ENCODE measurements at regions of chr2 and their contacts with region 1.

Region 1: DNA sequence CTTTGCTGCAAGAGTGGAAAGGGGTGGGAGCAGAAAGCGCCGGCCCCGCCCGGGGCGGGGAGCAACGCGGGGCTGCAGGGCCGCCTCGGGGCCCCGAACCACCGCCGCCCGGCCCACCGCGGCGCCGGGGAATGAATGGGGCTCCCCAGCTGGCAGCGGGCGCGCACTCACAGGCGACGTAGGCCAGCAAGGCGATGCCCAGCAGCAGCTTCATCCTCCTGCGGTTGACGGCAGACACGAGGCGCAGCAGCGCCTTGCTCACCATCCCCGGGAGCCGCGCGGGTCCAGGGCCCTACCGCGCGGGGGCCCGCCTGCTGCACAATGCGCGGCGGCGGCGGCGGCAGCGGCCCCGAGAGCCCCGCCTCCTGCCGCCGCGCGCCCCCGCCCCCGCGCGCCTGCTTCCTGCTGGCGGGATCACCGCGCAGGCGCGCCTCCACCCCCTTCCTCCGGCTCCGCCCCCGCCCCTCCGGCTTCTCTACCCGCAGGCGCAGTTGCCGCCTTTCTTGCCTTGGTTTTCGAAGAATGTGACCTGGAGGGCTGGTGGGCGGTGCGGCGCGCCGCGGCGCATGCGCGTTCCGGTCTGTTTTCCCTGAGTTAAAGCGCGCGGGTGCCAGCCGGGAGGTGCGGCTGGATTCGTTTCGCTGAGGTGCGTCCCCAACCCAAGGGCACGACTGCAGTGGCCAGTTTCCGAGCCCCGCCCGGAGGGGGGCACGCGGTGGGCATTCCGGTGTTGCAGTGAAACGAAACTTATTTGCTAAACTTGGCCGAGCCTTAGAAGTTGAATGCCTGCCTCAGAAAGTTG is at the start of gene UXS1:
- DNase-seq: peak; percentile 93 to 99
- H3K4me3 ChIP-seq: peak within 1 kb of the TSS; percentile 93 to 96
- H3K27ac ChIP-seq: peak within 1 kb of the TSS; percentile 74 to 78
- H3K4me1 ChIP-seq: peaks cover 0 to 8% of the 10 kb centered on the region in 2 donors
- H3K27me3 ChIP-seq: no peaks in the 10 kb centered on the region
- CTCF ChIP-seq: no peak
- total RNA-seq, gene UXS1: 146 TPM

Region 2: GRCh38 chr2:105337124-105338019 is 856.8 kb before region 1 on chr2 and contains the start of gene C2orf49:
- intact Hi-C with region 1: loop called (anchors 5 kb)
- DNase-seq: peak in 1 of 2 donors; percentile 91
- H3K4me3 ChIP-seq: peak within 1 kb of the TSS; percentile 69 to 73
- H3K27ac ChIP-seq: peak within 1 kb of the TSS; percentile 94 to 96
- H3K4me1 ChIP-seq: peaks cover 0 to 13% of the 10 kb centered on the region in 2 donors
- H3K27me3 ChIP-seq: no peaks in the 10 kb centered on the region
- CTCF ChIP-seq: no peak
- total RNA-seq, gene C2orf49: 12.2 TPM

Region 3: GRCh38 chr2:105576440-105577252 is 617.5 kb before region 1 on chr2:
- intact Hi-C with region 1: loop called (anchors 10 kb)
- DNase-seq: no peak
- H3K4me3 ChIP-seq: no peak overlapping the region
- H3K27ac ChIP-seq: no peak overlapping the region
- H3K4me1 ChIP-seq: peaks cover 0 to 4% of the 10 kb centered on the region in 2 donors
- H3K27me3 ChIP-seq: no peaks in the 10 kb centered on the region
- CTCF ChIP-seq: peak; percentile 44 to 70 (median 46)

Region 4: GRCh38 chr2:105744091-105744908 is 449.9 kb before region 1 on chr2:
- intact Hi-C with region 1: loop called (anchors 5 kb)
- DNase-seq: peak in 1 of 2 donors; percentile 76
- H3K4me3 ChIP-seq: peak overlapping the region; percentile 77 to 96
- H3K27ac ChIP-seq: peak overlapping the region; percentile 89 to 94
- H3K4me1 ChIP-seq: peaks cover 7 to 23% of the 10 kb centered on the region in 2 donors
- H3K27me3 ChIP-seq: no peaks in the 10 kb centered on the region
- CTCF ChIP-seq: no peak

Region 5: DNA sequence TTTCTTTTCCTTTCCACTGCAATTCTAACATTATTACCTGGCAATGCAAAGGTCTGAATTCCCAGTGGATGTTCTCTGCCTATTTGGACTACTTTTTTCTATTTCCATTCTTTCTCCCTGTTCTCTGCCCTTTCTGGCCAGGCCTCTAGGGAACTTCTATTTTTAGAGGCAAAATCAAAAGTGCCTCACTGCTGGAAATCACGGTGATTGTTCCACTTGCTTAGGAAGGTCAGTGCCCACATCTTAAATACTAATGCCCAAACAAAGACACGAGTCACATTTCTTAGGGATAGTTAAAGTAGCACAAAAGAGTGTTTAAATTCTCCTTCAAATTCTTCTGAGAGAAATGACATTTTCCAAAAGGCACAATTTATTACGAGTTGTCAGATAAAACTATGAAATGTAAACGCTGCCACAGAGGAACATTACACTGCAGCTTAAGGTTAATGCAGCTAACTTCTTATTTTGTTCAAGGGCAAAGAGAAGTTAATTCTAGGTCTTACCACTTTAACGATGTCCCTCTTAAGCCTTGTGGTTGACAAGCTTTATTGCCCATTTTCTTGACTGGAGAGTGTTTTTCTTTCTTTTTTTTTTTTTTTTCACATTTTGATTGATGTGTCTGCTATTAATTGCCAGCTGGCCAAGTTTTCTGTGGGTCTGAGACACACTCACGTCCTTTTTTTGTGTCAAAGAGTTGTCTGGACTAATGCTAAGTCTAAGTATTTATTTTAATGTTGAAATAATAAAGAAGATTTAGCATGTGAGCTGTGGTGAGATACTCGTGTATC is 657.1 kb after region 1 on chr2:
- intact Hi-C with region 1: loop called (anchors 10 kb)
- DNase-seq: no peak
- H3K4me3 ChIP-seq: peak overlapping the region; percentile 22 to 41
- H3K27ac ChIP-seq: peak overlapping the region; percentile 81 to 85
- H3K4me1 ChIP-seq: peaks cover 10 to 73% of the 10 kb centered on the region in 2 donors
- H3K27me3 ChIP-seq: no peaks in the 10 kb centered on the region
- CTCF ChIP-seq: no peak

Measured in ascending aorta (tissue), 2 donors.